ENCODE measurements at regions of chr1 and their contacts with region 1.

Region 1: DNA sequence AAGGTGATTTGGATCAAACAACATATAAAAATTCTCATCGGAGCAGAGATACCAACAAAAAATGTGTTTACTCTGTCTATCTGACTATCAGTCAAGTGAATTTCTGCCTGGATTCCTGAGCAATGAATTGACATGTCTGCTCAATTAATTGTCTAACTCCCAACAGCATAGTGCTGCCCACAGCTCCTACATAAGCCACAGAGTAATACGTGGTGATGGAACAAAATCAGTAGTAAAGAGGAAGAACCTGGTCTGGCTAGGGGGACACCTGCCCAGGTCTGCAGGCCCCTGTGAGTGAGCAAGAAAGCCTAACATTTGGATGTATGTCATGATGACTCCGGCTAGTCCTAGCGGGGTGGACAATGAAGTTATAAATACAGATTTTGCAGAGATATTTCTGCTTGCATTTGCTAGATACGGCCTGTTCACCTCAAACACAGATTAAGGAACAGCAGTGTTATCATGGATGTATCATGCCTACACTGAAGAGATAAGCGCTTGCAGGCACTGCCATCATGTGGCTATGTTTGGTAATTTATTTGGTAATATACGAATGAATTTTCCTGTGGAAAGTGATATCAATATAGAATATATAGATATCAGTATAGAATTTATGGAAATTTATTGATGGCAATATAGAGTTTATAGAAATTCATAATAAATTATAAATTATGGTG is 69.6 kb upstream of the LRRC8B start:
- DNase-seq: peak; percentile 44 to 59
- H3K4me3 ChIP-seq: no peak overlapping the region
- H3K27ac ChIP-seq: no peak overlapping the region
- H3K4me1 ChIP-seq: no peaks in the 10 kb centered on the region
- H3K27me3 ChIP-seq: no peaks in the 10 kb centered on the region
- CTCF ChIP-seq: peak in 5 of 6 experiments; percentile 52 to 85 (median 76)
- POLR2A ChIP-seq: no peak

Region 2: DNA sequence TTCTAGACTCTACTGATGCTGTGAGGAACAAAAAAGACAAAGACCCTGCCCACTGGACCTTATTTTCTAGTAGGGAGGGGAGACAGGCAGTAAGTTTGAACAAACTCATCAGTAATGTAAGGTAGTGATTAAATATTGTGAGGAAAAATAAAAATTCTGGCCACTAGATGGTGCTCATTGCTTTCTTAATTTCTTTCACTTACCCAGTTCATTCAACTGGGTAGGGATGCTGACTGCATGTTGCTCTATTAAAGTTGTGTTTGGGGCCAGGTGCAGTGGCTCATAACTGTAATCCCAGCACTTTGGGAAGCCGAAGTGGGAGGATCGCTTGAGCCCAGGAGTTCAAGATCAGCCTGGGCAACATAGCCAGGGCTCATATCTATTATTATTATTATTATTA is 456.3 kb before region 1 on chr1:
- intact Hi-C with region 1: loop called (anchors 5 kb)
- DNase-seq: peak; percentile 35
- H3K4me3 ChIP-seq: no peak overlapping the region
- H3K27ac ChIP-seq: no peak overlapping the region
- H3K4me1 ChIP-seq: peaks cover 0 to 2% of the 10 kb centered on the region in 2 donors
- H3K27me3 ChIP-seq: no peaks in the 10 kb centered on the region
- CTCF ChIP-seq: peak in 5 of 6 experiments; percentile 29 to 75 (median 44)
- POLR2A ChIP-seq: no peak

Region 3: DNA sequence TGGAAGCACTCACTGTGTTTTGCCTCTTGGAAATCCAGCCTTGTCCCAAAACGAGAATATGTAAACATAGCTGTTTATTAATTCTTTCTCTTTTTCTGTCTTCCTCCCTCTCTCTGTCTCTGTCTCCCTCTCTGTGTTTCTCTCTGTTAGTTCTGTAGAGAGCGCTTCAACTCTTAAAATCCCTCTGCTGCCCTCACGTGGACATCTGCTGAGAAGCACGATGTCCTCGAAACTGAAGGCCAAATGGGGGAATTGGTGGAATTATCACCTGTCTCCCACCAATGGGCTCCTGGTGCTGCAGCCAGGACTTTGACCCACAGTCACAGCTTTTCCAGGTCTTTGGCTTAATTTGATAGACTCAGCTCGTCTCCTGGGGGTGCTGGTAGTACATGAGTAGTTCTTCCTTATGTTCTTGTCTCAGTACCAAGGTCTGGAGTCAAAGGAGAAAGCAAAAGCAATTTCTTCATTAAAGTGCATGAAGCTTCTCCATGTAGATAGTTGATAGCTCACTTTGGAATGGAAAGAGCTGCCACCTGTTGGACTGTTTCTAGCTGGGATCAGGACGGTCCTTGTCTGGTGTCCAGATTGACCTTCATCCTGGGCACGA is 96.6 kb before region 1 on chr1:
- intact Hi-C with region 1: loop called (anchors 10 kb)
- DNase-seq: peak; percentile 74 to 85
- H3K4me3 ChIP-seq: no peak overlapping the region
- H3K27ac ChIP-seq: no peak overlapping the region
- H3K4me1 ChIP-seq: peaks cover 0 to under 1% of the 10 kb centered on the region in 2 donors
- H3K27me3 ChIP-seq: no peaks in the 10 kb centered on the region
- CTCF ChIP-seq: peak; percentile 19 to 84 (median 68)
- POLR2A ChIP-seq: no peak